ENCODE measurements at regions of chr4 and their contacts with region 1.

Region 1: GRCh38 chr4:153127760-153128494 is 76.3 kb upstream of the TRIM2 start:
- DNase-seq: peak; percentile 87 to 90
- H3K4me3 ChIP-seq: no peak overlapping the region
- H3K27ac ChIP-seq: no peak overlapping the region
- H3K4me1 ChIP-seq: peaks cover 0 to 4% (median 0%) of the 10 kb centered on the region in 4 donors
- H3K27me3 ChIP-seq: no peaks in the 10 kb centered on the region
- CTCF ChIP-seq: peak; percentile 83 to 90

Region 2: DNA sequence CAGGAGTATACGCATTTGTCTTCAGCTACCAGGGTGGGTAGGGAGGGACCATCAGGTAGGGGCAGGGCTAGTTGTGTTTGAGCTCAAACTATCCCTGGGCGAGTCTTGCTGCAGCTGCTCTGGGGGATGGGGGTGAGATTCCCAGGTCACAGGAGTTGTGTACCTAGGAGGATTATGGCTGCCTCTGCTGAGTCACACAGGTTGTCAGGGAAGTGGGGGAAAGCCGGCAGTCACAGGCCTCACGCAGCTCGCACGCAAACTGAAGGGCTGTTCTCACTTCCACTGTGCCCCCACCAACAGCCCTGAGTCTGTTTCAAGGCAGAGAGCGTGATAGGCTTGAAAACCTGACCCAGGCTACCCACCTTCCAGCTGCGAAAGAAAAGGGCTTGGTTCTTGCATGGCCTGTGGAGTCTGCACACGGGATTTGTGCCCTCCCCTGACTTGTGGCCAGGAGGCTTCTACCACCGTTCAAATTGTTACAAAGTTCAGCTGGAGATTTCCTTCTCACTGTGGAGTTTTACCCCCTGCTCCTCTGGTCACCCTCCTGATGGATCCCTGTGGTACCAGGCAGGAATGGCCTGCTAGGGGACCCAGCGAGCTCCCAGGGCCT is 284.3 kb before region 1 on chr4:
- intact Hi-C with region 1: loop called (anchors 10 kb)
- DNase-seq: no peak
- H3K4me3 ChIP-seq: no peak overlapping the region
- H3K27ac ChIP-seq: no peak overlapping the region
- H3K4me1 ChIP-seq: no peaks in the 10 kb centered on the region
- H3K27me3 ChIP-seq: no peaks in the 10 kb centered on the region
- CTCF ChIP-seq: no peak

Region 3: GRCh38 chr4:153084980-153085630 is 42.8 kb before region 1 on chr4:
- intact Hi-C with region 1: loop called (anchors 2 kb)
- DNase-seq: peak; percentile 64 to 77
- H3K4me3 ChIP-seq: no peak overlapping the region
- H3K27ac ChIP-seq: no peak overlapping the region
- H3K4me1 ChIP-seq: peaks cover 0 to 27% (median 13%) of the 10 kb centered on the region in 4 donors
- H3K27me3 ChIP-seq: no peaks in the 10 kb centered on the region
- CTCF ChIP-seq: peak; percentile 84 to 92